Mammary epithelial cell (primary cell): ENCODE measurements at regions of chr6 and their contacts with region 1.

Region 1: DNA sequence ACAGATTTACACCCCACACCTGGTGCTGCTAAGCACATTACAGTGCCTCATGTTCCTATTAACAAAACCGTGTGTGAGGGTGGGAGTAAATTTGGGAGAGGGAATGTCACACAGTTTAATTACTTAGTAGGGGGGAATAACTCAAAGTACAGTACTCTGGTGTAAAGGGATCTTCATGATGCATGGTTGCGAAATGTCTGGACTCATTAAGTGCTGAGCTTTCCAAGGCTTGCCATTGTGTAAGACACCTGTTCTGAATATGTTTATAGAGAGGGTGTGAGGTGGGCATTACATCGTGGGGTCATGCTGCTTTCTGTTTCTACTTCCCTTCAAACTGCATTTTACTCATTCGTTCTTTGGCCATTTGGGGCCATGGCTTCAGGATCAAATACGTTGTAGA is 181.2 kb downstream of the ADGRG6 start:
- DNase-seq: no peak
- H3K4me3 ChIP-seq: no peak overlapping the region
- H3K27ac ChIP-seq: no peak overlapping the region
- H3K4me1 ChIP-seq: peaks cover 3% of the 10 kb centered on the region
- H3K27me3 ChIP-seq: no peaks in the 10 kb centered on the region
- CTCF ChIP-seq: no peak

Region 2: DNA sequence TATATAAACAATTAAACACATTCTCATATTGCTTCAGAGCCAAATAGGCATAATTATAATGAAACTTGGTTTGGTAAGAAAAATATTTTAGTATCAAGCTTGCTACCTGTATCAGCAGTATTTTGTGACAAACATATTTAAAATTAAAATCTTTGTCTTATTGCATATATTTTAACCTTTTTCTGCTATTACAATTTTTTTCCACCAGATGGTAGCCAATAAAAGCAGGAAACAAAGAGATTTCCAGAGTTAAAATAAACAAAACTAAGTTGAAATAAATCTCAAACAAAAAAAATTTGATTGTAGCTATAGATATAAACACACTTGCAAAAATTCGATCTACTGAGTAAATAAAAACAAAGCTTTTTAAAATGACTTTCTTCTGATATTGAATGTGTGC is 841.6 kb before region 1 on chr6:
- CTCF ChIA-PET with region 1: no interaction called
- dilution Hi-C with region 1: no loop called
- in situ Hi-C with region 1: no loop called
- intact Hi-C with region 1: no loop called
- DNase-seq: no peak
- H3K4me3 ChIP-seq: no peak overlapping the region
- H3K27ac ChIP-seq: no peak overlapping the region
- H3K4me1 ChIP-seq: no peaks in the 10 kb centered on the region
- H3K27me3 ChIP-seq: peaks cover 3% of the 10 kb centered on the region
- CTCF ChIP-seq: peak in 1 of 2 donors; percentile 22

Region 3: GRCh38 chr6:142518115-142518514 is 35.1 kb after region 1 on chr6:
- CTCF ChIA-PET with region 1: no interaction called
- dilution Hi-C with region 1: no loop called
- in situ Hi-C with region 1: no loop called
- intact Hi-C with region 1: no loop called
- DNase-seq: peak; percentile 2
- H3K4me3 ChIP-seq: no peak overlapping the region
- H3K27ac ChIP-seq: no peak overlapping the region
- H3K4me1 ChIP-seq: peaks cover 9% of the 10 kb centered on the region
- H3K27me3 ChIP-seq: no peaks in the 10 kb centered on the region
- CTCF ChIP-seq: no peak

Region 4: GRCh38 chr6:142537612-142538478 is 54.9 kb after region 1 on chr6:
- CTCF ChIA-PET with region 1: no interaction called
- dilution Hi-C with region 1: loop called (anchors 5 kb)
- in situ Hi-C with region 1: loop called (anchors 5 to 10 kb)
- intact Hi-C with region 1: no loop called
- DNase-seq: peak; percentile 18
- H3K4me3 ChIP-seq: no peak overlapping the region
- H3K27ac ChIP-seq: no peak overlapping the region
- H3K4me1 ChIP-seq: peaks cover 8% of the 10 kb centered on the region
- H3K27me3 ChIP-seq: no peaks in the 10 kb centered on the region
- CTCF ChIP-seq: peak; percentile 67 to 79

Region 5: DNA sequence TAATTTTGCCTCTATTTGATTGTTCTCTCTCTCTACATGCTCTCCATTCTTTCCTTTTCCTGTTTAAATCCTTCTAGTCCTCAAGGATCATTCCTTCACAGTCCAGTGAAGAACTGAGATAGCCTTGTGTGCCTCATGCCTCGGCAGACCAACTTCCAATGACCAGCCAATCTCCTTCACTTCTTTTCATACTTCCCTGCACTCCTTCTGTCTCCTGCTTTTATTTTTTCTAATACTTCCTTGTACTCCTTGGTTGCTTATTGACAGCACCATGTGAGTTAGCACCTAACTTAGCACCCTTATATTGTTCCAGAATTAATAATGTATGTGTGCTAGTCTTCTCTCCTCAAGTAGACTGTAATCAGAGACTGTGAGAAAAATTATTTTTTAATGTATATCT is 65.6 kb after region 1 on chr6:
- CTCF ChIA-PET with region 1: no interaction called
- dilution Hi-C with region 1: no loop called
- in situ Hi-C with region 1: no loop called
- intact Hi-C with region 1: no loop called
- DNase-seq: no peak
- H3K4me3 ChIP-seq: no peak overlapping the region
- H3K27ac ChIP-seq: no peak overlapping the region
- H3K4me1 ChIP-seq: peaks cover 26% of the 10 kb centered on the region
- H3K27me3 ChIP-seq: no peaks in the 10 kb centered on the region
- CTCF ChIP-seq: no peak